Left cardiac atrium (tissue), 4 donors: ENCODE measurements at regions of chr13 and their contacts with region 1.

Region 1: GRCh38 chr13:47774671-47774994 is 226.4 kb downstream of the SUCLA2 start:
- DNase-seq: no peak
- ATAC-seq: no peak

Region 2: GRCh38 chr13:46831588-46832194 is 942.9 kb before region 1 on chr13:
- intact Hi-C with region 1: loop called in 1 of 2 experiments (anchors 5 kb)
- DNase-seq: no peak
- ATAC-seq: no peak

Region 3: GRCh38 chr13:47415048-47415447 is 359.6 kb before region 1 on chr13:
- intact Hi-C with region 1: loop called (anchors 1 to 5 kb)
- DNase-seq: no peak
- ATAC-seq: no peak